Uterus (tissue), 4 donors: ENCODE measurements at regions of chr18 and their contacts with region 1.

Region 1: GRCh38 chr18:11654736-11655605 is 34.1 kb upstream of the GNAL start:
- DNase-seq: peak in 1 of 2 donors; percentile 37
- H3K4me3 ChIP-seq: no peak overlapping the region
- H3K27ac ChIP-seq: no peak overlapping the region
- H3K4me1 ChIP-seq: no peaks in the 10 kb centered on the region
- H3K27me3 ChIP-seq: no peaks in the 10 kb centered on the region
- CTCF ChIP-seq: peak; percentile 41 to 62 (median 52)
- POLR2A ChIP-seq: no peak

Region 2: DNA sequence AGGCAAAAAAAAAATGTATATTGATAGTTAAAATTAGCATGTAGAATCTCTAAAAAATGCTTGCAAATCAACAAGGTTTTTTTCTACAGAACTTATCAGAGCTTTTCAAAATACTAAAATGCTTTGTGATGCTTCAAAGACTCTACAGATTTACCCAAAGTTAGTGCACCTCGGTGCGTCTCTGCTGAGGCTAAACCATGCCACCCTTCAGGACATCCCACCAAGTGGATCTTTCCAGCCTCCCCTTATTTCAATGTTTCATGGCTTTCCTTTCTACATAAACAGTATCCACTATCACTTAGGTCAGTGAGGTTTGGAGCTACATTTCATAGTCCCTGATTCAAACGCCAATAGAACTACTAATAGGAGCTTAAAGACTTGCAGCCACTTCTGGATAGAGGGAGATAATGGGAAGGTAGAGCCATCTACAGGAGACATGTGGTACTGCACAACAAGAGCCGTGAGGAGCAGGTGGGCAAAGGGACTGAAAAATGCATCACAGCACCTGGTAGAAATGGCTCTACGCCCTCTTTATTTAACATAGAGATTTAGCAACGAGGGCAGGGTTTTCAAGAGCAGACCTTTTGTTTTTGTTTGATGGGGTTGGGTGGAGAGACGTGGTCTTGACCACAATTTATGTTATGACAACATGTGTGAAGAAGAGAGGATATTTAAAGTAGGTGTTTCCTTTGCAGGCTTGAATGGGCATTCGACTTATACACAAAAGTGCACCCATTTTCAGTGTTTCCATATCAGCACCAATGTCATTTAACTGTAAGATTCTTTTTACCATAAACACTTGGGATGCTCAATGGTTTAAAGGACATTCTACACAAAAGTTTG is 101.7 kb before region 1 on chr18:
- intact Hi-C with region 1: no loop called
- DNase-seq: no peak
- H3K4me3 ChIP-seq: no peak overlapping the region
- H3K27ac ChIP-seq: no peak overlapping the region
- H3K4me1 ChIP-seq: no peaks in the 10 kb centered on the region
- H3K27me3 ChIP-seq: no peaks in the 10 kb centered on the region
- CTCF ChIP-seq: peak; percentile 61 to 69 (median 64)
- POLR2A ChIP-seq: no peak

Region 3: DNA sequence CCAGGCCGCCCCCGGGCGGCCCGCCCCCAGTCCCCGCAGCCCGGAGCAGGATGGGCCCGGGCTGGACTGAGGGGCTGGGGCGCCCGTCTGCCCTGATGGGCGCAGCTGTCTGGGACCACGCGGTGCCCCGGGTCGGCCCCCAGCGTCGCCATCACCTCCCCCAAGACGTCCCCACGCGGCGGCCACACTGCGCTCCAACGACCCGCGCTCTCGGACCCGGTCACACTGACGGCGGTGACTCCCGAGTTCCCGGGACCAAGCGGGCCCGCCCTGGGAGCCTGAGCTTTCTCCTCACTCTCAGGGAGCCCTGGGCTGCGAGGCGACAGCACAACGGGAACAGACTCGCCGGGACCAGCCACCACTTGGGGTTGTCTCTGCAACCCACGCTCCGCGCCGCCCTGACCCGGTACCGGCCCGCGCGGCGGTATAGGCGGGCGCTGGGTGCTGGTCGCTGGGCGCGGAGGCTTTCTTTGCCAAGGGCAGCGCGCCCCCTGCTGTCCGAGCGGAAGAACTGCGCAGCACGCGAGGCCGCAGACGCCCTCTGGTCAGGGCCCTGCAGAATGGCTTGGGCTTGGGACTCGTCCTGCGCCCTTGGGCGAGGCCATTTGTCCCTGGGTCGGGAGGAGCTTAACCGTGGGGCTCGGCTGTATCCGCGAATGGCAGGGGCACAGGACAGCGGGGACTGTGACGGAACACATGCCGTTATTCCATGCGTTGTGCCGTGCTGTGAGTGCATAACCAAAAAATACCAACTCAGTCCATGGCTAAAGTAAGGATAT is 383.9 kb after region 1 on chr18:
- intact Hi-C with region 1: loop called (anchors 10 kb)
- DNase-seq: peak; percentile 73 to 84
- H3K4me3 ChIP-seq: peak overlapping the region; percentile 40 to 51
- H3K27ac ChIP-seq: peak overlapping the region in 1 of 2 donors; percentile 9
- H3K4me1 ChIP-seq: no peaks in the 10 kb centered on the region
- H3K27me3 ChIP-seq: no peaks in the 10 kb centered on the region
- CTCF ChIP-seq: peak; percentile 96 to 99 (median 99)
- POLR2A ChIP-seq: no peak